ENCODE measurements at regions of chr6 and their contacts with region 1.

Region 1: GRCh38 chr6:158072083-158072721 is 90.5 kb downstream of the SYNJ2 start:
- DNase-seq: peak; percentile 71
- ATAC-seq: peak; percentile 77
- H3K4me3 ChIP-seq: no peak overlapping the region
- H3K27ac ChIP-seq: peak overlapping the region; percentile 16
- H3K4me1 ChIP-seq: peaks cover 32% of the 10 kb centered on the region
- H3K27me3 ChIP-seq: no peaks in the 10 kb centered on the region
- CTCF ChIP-seq: peak; percentile 97
- EP300 ChIP-seq: no peak
- POLR2A ChIP-seq: no peak
- RAD21 ChIP-seq: peak; percentile 94

Region 2: DNA sequence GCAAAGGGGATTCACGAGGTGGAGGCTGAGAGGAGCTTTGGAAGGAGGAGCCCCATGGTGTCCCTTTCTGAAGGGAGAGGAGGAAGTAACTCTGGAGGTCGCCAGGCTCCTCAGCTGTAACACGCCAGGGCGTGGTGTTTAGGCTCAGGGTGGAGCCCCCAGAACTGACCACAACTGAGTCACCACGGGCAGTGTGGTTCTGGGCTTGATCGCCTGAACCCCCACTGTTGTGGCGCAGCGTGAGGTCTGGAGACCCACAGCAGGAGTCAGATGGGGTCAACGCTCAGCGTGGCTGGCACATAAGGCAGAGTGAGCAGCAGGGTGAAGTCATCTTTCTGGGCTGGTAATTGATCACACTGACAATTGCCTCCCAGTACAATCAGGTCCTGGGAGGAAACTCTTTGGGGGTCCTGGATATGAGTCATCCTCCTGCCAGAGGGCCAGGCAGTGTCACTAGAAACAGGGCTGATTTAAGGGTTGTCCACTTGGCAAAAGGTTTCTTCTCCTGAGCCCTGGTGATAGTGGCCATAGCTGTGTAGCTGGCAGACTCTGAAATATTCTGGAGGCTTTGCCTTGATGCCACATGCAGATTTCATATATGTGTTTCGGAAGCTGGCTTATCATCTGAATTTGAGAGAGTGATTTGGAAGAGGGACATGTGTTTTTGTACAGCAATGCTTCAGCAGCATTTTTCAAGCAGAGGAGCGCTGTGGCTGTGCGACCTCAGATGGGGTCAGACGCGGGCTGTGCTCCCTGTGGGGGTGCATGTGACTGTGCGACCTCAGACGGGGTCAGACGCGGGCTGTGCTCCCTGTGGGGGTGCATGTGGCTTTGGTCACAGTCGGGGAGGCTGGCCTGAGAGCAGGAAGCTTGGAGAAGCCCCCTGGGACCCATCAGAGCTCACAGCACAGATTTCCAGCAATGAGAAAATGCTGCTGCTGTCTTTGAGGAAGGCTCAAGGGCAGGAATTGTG is 40.5 kb before region 1 on chr6:
- CTCF ChIA-PET with region 1: no interaction called
- POLR2A ChIA-PET with region 1: no interaction called
- in situ Hi-C with region 1: no loop called
- intact Hi-C with region 1: loop called (anchors 1 kb)
- DNase-seq: no peak
- ATAC-seq: no peak
- H3K4me3 ChIP-seq: no peak overlapping the region
- H3K27ac ChIP-seq: peak overlapping the region; percentile 25
- H3K4me1 ChIP-seq: peaks cover 66% of the 10 kb centered on the region
- H3K27me3 ChIP-seq: no peaks in the 10 kb centered on the region
- CTCF ChIP-seq: no peak
- EP300 ChIP-seq: no peak
- POLR2A ChIP-seq: peak in 1 of 2 experiments; percentile 29; a peak in 2 of 4 replicates
- RAD21 ChIP-seq: no peak